Psoas muscle (tissue), 8 donors: ENCODE measurements at regions of chr1 and their contacts with region 1.

Region 1: GRCh38 chr1:22704440-22705067 is 6.1 kb upstream of the EPHB2 start:
- DNase-seq: peak; percentile 79 to 85
- ATAC-seq: peak; percentile 94 to 97 (median 94)
- H3K4me3 ChIP-seq: no peak overlapping the region
- H3K27ac ChIP-seq: no peak overlapping the region
- H3K4me1 ChIP-seq: no peaks in the 10 kb centered on the region
- H3K27me3 ChIP-seq: peaks cover 0 to 8% (median 0%) of the 10 kb centered on the region in 3 donors
- CTCF ChIP-seq: peak; percentile 94

Region 2: GRCh38 chr1:22889213-22889827 is 184.8 kb after region 1 on chr1:
- intact Hi-C with region 1: loop called (anchors 1 to 5 kb)
- DNase-seq: no peak
- ATAC-seq: peak in 1 of 4 donors; percentile 43
- H3K4me3 ChIP-seq: no peak overlapping the region
- H3K27ac ChIP-seq: no peak overlapping the region
- H3K4me1 ChIP-seq: no peaks in the 10 kb centered on the region
- H3K27me3 ChIP-seq: peaks cover 0 to 11% (median 0%) of the 10 kb centered on the region in 3 donors
- CTCF ChIP-seq: peak; percentile 68

Region 3: DNA sequence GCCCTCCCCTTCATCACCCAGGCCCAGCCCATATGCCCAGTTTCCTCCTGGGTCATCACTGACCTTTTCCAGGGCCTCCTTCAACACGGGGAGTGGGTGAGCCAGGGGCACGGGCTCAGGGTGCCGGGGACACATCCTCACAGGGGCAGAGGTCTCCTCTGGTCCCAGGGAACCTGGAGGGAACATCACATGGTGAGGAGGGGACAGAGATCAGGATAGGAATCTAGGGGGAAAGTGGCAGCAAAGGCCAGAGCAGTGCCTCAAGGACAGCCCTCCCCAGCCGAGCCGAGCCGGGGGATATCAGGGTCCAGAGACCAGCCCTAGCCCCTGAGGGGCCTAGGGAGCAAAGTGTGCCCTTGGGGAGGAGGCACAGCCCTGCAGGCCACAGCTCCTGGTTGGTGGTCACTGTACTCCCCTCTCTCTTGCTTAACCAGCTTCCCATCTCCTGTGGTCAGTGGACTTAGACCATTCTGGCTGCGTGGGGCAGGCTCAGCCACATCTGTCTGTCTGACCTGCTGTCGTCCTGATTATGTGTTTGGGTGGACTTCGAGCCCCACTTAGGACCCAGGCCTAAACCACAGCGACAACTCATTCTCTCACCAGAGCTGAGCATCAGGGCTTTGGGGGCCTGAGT is 258.6 kb after region 1 on chr1:
- intact Hi-C with region 1: loop called (anchors 5 to 10 kb)
- DNase-seq: no peak
- ATAC-seq: no peak
- H3K4me3 ChIP-seq: no peak overlapping the region
- H3K27ac ChIP-seq: no peak overlapping the region
- H3K4me1 ChIP-seq: no peaks in the 10 kb centered on the region
- H3K27me3 ChIP-seq: peaks cover 0 to 22% (median 0%) of the 10 kb centered on the region in 3 donors
- CTCF ChIP-seq: no peak

Region 4: DNA sequence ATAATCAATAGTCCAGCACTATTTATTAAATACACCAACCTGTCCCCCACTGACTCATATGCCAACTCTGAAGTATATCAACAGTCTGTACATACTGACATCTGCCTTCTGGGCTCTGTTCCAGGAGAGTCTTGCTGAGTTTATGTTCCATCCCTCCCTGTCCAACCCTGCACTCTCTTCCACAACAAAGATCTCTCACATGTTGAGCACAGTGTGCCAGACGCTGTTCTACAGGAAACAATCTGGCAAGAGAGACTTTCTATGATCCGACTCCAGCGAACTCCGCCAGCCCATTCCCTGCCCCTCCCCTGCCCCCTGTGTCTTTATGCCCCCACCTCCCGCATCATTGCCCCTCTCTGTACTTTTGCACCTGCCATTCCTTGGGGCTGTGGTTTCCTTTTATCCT is 264.8 kb after region 1 on chr1:
- intact Hi-C with region 1: loop called (anchors 5 to 10 kb)
- DNase-seq: no peak
- ATAC-seq: no peak
- H3K4me3 ChIP-seq: no peak overlapping the region
- H3K27ac ChIP-seq: no peak overlapping the region
- H3K4me1 ChIP-seq: no peaks in the 10 kb centered on the region
- H3K27me3 ChIP-seq: peaks cover 0 to 62% (median 4%) of the 10 kb centered on the region in 3 donors
- CTCF ChIP-seq: no peak